WTC11 (cell line): ENCODE measurements at regions of chr10 and their contacts with region 1.

Region 1: GRCh38 chr10:14200698-14201544 is 129.8 kb downstream of the FRMD4A start:
- DNase-seq: peak; percentile 80
- ATAC-seq: peak; percentile 81
- H3K4me3 Mint-ChIP-seq: no peak overlapping the region
- H3K27ac Mint-ChIP-seq: peak overlapping the region; percentile 48
- H3K4me1 Mint-ChIP-seq: peaks cover 25% of the 10 kb centered on the region
- H3K27me3 Mint-ChIP-seq: no peaks in the 10 kb centered on the region
- CTCF ChIP-seq: peak; percentile 81

Region 2: DNA sequence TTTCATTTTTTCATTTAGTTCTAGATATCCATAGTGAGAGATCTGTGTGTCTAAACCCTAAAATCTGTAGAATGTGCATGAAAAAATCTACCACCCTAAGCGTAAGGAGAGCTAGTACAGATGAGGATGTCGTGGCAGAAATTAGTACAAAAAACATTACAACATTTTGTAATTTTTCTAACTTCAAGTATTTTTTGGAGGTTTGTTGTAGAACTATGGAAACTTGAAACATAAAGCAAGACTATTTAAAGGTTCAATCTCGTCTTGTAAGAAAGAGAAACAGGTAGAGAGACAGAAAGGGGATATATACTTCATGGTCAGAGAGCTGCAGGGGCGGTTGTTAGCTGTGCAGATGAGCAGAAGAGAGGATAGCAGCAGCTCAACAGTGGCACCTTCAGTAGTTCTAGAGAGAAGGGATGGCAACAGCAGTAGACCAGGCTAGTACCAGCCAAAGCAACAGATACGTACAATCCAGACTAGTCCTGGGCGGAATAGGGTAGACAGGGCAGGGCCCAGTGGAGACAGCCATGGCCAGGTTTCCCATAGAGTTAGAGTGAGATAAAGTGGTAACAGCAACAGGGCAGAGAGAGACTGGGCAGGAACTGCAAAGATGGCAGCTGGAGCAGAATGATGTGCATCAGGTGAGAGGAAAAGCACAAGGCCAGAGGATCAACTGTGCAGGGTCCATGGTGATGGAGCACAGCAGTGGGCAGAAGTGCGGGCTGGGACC is 15.4 kb before region 1 on chr10:
- CTCF ChIA-PET with region 1: interaction called, 75 read pairs
- POLR2A ChIA-PET with region 1: interaction called, 16 read pairs
- DNase-seq: peak; percentile 42
- ATAC-seq: peak; percentile 97
- H3K4me3 Mint-ChIP-seq: no peak overlapping the region
- H3K27ac Mint-ChIP-seq: peak overlapping the region; percentile 100
- H3K4me1 Mint-ChIP-seq: peaks cover 26% of the 10 kb centered on the region
- H3K27me3 Mint-ChIP-seq: no peaks in the 10 kb centered on the region; the same call in 1 of the 2 replicates
- CTCF ChIP-seq: no peak

Region 3: DNA sequence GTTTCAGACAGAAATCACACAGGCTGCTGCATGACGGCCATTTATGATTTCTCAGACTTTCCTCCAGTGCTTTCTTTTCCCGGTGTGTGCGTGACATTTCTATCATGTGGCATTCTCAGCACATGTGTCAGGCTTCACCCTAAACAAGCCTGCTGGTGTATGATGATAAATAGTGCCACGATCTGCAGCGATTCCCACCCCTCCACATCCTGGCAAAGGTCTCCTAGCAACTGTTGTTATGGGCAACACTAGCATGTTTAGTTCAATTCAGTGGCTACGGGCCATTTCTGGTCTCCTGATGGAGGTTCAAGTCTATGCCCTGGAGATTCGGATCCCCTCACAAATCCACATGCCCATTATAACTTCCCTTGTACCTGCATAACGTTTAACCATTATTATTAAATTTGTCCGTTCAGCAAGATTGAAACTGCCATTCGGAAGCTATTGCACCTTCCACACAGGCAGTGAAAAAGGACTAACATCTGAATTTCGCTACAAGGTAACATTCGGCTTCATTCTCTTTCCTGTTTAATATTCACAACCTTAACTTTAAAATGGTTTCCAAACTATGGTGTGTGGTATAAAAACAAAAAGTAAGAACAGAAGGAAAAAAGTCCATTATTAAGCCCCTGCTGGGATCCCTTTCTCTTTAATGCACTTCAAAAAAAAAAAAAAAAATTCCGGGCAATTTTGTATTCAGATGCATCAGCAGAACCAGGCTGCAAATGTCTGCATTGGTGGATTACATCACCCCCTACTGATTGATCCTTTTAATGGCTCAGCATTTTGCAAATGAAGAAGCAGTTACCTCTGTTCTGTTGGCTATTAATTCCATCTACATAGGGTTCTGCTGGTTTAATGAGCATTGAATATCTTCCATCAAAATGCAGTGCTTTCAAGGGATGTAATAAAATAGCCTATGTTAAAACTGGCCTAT is 39.6 kb after region 1 on chr10:
- CTCF ChIA-PET with region 1: interaction called, 26 read pairs
- POLR2A ChIA-PET with region 1: no interaction called
- DNase-seq: peak; percentile 14
- ATAC-seq: peak; percentile 73
- H3K4me3 Mint-ChIP-seq: no peak overlapping the region
- H3K27ac Mint-ChIP-seq: no peak overlapping the region
- H3K4me1 Mint-ChIP-seq: peaks cover 32% of the 10 kb centered on the region
- H3K27me3 Mint-ChIP-seq: peaks cover 4% of the 10 kb centered on the region
- CTCF ChIP-seq: no peak

Region 4: DNA sequence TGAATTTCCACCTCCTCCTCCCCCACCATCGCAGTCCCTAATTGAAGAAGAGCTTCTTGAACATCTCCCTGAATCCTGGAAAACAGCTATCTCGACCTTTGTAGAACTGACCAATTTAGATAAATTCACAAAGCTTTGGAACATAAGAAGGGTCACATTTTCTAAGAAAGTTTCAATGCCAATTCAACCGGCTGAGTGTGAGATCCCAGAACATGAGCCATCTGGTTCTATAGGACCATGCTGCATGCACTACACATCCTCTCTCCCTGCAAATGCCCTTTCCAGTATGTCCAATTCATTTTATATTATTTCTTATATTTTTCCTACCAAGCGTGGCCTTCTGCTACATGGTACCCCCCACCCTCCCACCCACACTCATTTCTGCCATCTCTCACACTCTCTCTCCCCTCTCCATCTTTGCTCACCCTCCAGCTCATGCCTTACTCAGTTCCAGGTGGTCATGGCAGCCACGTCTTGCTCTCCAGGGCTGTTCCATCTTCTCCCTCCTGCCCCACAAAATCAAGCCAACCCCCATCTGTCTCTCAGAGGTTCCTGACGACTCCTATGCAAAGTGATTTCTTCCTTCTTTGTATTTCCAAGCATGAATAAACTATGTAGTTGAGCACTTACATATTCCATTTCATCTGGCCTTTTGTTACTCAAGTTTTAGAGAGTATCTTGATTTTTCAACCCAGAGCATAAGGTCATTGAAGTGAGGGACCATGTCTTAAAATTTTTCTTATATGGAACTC is 110.5 kb after region 1 on chr10:
- CTCF ChIA-PET with region 1: interaction called, 15 read pairs
- POLR2A ChIA-PET with region 1: no interaction called
- DNase-seq: no peak
- ATAC-seq: no peak
- H3K4me3 Mint-ChIP-seq: no peak overlapping the region
- H3K27ac Mint-ChIP-seq: no peak overlapping the region
- H3K4me1 Mint-ChIP-seq: peaks cover 22% of the 10 kb centered on the region
- H3K27me3 Mint-ChIP-seq: peaks cover 9% of the 10 kb centered on the region
- CTCF ChIP-seq: no peak

Region 5: GRCh38 chr10:14478604-14479003 is 277.7 kb after region 1 on chr10:
- CTCF ChIA-PET with region 1: interaction called, 60 read pairs
- POLR2A ChIA-PET with region 1: no interaction called
- DNase-seq: peak; percentile 58
- ATAC-seq: peak; percentile 94
- H3K4me3 Mint-ChIP-seq: no peak overlapping the region
- H3K27ac Mint-ChIP-seq: no peak overlapping the region; the same call in none of the 2 replicates
- H3K4me1 Mint-ChIP-seq: peaks cover 11% of the 10 kb centered on the region
- H3K27me3 Mint-ChIP-seq: no peaks in the 10 kb centered on the region
- CTCF ChIP-seq: peak; percentile 41; the same call in 1 of the 2 replicates

Region 6: GRCh38 chr10:14617852-14618251 is 416.9 kb after region 1 on chr10:
- CTCF ChIA-PET with region 1: no interaction called
- POLR2A ChIA-PET with region 1: no interaction called
- DNase-seq: no peak
- ATAC-seq: no peak
- H3K4me3 Mint-ChIP-seq: no peak overlapping the region
- H3K27ac Mint-ChIP-seq: no peak overlapping the region
- H3K4me1 Mint-ChIP-seq: peaks cover 10% of the 10 kb centered on the region
- H3K27me3 Mint-ChIP-seq: no peaks in the 10 kb centered on the region; the same call in 1 of the 2 replicates
- CTCF ChIP-seq: no peak